ENCODE measurements at regions of chr1 and their contacts with region 1.

Region 1: DNA sequence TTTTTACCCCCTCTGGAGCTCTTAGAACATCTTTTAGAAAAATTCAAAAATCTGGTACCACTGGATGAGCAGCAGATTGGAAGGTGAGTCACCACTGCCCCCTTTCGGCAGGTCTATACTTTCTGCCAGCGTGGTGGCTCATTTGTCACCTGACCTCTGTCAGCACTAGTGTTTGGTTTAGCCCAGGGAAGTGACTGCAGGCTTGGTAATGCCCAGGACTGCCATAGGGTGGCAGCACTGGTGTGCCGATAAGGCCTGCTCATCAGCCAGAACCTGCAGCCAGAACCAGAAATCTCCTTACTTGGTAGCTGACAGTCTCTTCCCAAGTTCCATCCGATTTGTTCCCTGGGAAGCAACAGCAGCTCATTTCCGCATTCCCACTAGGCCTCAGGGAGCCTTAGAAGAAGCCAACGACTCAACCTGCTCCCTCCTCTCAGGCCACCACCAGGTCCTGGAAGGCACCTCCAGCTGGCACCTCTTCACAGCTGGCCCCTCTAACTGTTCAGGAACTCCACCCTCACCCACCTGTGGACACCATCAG is 6.8 kb downstream of the SMIM12 start:
- DNase-seq: peak; percentile 90
- ATAC-seq: peak; percentile 99
- H3K4me3 ChIP-seq: no peak overlapping the region
- H3K27ac ChIP-seq: peak overlapping the region; percentile 8; the same call in 1 of the 2 replicates
- H3K4me1 ChIP-seq: peaks cover 0 to 3% of the 10 kb centered on the region in 2 experiments; a peak in 1 of 4 replicates
- H3K27me3 ChIP-seq: no peaks in the 10 kb centered on the region
- CTCF ChIP-seq: peak; percentile 98 to 99 (median 98)
- POLR2A ChIP-seq: no peak
- RAD21 ChIP-seq: peak; percentile 91

Region 2: DNA sequence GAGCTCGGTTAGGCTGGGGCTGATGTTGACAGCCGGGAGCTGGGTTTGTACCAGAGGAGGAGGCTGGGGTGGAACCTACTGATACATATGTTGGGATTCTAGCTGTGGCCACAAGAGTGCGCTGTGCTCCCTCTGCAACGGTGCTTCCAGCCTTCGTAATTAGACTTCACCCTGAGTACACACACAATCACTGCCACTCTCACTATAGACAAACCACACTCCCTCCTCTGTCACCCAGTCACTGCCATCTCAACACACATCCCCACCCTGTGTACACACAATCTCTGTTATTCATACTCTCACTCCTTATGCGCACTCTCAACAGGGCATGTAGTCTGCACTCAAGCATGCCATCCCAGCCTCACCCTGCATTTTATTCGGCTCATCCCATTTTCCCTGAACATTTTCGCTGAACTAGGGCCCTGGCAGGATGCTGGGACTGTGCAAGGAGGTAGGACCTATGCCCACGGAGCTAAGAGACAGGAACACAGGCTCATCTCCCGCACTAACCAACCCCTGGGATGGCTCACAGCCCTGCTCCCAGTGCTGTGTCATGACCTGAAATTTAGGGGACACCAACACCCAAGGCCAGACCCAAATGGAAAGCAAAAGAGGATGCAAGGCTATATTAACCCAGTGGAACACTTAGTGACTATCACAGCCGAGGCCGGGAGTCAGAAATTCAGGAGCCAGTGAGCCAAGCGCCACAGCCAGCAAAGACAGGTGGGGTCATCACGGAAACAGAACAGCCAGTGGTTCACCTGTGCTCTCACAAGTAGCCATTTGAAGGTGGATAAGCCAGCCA is 66.0 kb before region 1 on chr1:
- CTCF ChIA-PET with region 1: interaction called, 18 read pairs
- POLR2A ChIA-PET with region 1: no interaction called
- RAD21 ChIA-PET with region 1: interaction called in 1 of 2 experiments, 3 read pairs
- intact Hi-C with region 1: loop called (anchors 1 kb)
- DNase-seq: no peak
- ATAC-seq: peak; percentile 56
- H3K4me3 ChIP-seq: no peak overlapping the region
- H3K27ac ChIP-seq: no peak overlapping the region
- H3K4me1 ChIP-seq: peaks cover 20 to 39% of the 10 kb centered on the region in 2 experiments
- H3K27me3 ChIP-seq: no peaks in the 10 kb centered on the region
- CTCF ChIP-seq: peak in 2 of 3 experiments; percentile 81 to 87; a peak in 4 of 6 replicates
- POLR2A ChIP-seq: no peak
- RAD21 ChIP-seq: no peak

Region 3: GRCh38 chr1:34865981-34866761 is 13.4 kb after region 1 on chr1:
- CTCF ChIA-PET with region 1: interaction called, 19 read pairs
- POLR2A ChIA-PET with region 1: no interaction called
- RAD21 ChIA-PET with region 1: no interaction called
- intact Hi-C with region 1: no loop called
- DNase-seq: peak; percentile 37
- ATAC-seq: peak; percentile 87
- H3K4me3 ChIP-seq: peak overlapping the region; percentile 28 to 51
- H3K27ac ChIP-seq: no peak overlapping the region; the same call in 1 of the 2 replicates
- H3K4me1 ChIP-seq: peaks cover 0 to 8% of the 10 kb centered on the region in 2 experiments; a peak in 2 of 4 replicates
- H3K27me3 ChIP-seq: peaks cover 2% of the 10 kb centered on the region; the same call in 1 of the 2 replicates
- CTCF ChIP-seq: peak; percentile 89 to 97 (median 93)
- POLR2A ChIP-seq: no peak
- RAD21 ChIP-seq: peak; percentile 55

Region 4: GRCh38 chr1:35298464-35298863 is 445.7 kb after region 1 on chr1:
- CTCF ChIA-PET with region 1: no interaction called
- POLR2A ChIA-PET with region 1: no interaction called
- RAD21 ChIA-PET with region 1: no interaction called
- intact Hi-C with region 1: loop called (anchors 10 kb)
- DNase-seq: no peak
- ATAC-seq: peak; percentile 61; the same call in 1 of the 2 replicates
- H3K4me3 ChIP-seq: no peak overlapping the region
- H3K27ac ChIP-seq: no peak overlapping the region
- H3K4me1 ChIP-seq: no peaks in the 10 kb centered on the region
- H3K27me3 ChIP-seq: no peaks in the 10 kb centered on the region
- CTCF ChIP-seq: peak; percentile 33 to 50 (median 40); a peak in 5 of 6 replicates
- POLR2A ChIP-seq: no peak
- RAD21 ChIP-seq: peak; percentile 73

Measured in HCT116 (cell line).